Ascending aorta (tissue), 2 donors: ENCODE measurements at regions of chr19 and their contacts with region 1.

Region 1: DNA sequence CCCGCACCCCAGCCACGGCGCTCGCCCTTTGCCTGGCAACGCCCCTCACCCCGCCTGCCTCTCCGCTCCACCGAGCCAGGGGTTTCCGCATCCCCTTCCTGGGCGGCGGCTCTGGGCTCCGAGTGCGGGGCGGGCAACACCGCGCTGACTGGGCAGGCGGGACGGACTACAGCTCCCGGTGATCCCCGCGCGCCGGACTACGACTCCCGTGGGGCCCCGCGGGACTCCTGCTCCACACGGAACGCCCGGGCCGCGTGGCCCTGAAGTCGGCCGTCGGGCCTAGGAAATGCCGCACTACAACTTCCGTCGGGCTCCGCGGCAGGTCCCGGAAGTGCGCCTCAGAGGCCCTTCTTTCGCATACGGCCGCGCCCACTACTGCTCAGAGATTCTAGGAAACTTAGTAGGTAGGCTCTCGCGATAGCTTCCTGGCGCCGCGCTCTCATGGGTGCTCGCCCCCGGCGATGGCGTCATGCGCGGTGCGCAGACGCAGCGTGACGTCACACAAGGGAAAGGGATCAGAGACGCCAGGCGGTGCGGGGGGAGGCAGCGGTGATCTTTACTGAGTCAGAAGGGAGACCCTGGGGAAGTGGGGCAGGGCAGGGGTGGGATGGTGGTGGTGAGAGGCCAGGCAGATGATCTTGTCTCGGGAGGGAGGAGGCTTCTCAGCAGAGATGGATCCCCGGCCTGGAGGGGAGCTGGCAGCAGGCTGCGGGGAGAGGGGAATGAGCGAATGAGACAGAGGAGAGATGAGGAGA is at the start of gene JOSD2:
- DNase-seq: peak; percentile 97 to 100
- H3K4me3 ChIP-seq: peak within 1 kb of the TSS; percentile 80 to 92
- H3K27ac ChIP-seq: peak within 1 kb of the TSS; percentile 65 to 68
- H3K4me1 ChIP-seq: peaks cover 6% of the 10 kb centered on the region in 2 donors
- H3K27me3 ChIP-seq: no peaks in the 10 kb centered on the region
- CTCF ChIP-seq: no peak
- total RNA-seq, gene JOSD2: 169 TPM

Region 2: DNA sequence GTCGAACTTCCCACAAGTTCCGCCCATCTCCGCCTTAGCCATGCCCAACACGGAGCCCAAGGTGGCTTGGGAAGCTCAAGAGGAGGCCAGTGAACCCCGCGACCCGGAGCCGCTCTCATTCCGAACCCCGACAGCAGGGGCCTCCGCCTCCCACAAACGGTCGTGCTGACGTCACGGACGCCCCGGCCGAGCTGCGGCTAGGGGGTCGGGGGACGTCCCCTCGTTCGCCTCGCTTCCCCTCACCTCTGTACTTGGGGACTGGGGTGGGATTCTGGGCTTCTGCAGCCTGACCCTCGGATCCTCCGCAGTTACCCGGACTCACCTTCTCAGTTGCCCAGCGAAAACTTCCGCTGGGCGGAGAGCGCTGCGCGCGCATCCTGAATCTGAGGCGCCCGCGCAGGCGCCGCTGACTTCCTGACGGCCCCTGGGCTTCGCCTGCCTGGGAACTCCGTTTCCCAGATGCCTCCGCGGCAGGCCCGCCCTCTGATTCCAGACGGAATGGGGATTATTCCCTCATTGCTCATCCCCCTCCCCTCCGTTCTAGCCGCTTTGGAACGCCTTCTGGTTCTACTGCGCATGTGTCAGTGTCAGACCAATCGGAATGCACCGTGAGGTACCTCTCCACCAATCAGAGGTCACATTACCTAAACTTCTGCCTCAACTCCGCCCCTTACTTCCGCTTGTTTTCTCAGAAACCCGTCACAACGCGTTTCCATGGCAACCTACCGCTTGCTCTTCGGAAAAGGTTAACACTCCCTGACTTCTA is 486.0 kb before region 1 on chr19 and contains the start of gene VRK3:
- intact Hi-C with region 1: loop called (anchors 10 kb)
- DNase-seq: peak; percentile 99 to 100
- H3K4me3 ChIP-seq: peak within 1 kb of the TSS; percentile 84 to 95
- H3K27ac ChIP-seq: peak within 1 kb of the TSS; percentile 87 to 94
- H3K4me1 ChIP-seq: peaks cover 15 to 22% of the 10 kb centered on the region in 2 donors
- H3K27me3 ChIP-seq: no peaks in the 10 kb centered on the region
- CTCF ChIP-seq: peak in 1 of 3 experiments; percentile 23
- total RNA-seq, gene VRK3: 27.6 TPM

Region 3: DNA sequence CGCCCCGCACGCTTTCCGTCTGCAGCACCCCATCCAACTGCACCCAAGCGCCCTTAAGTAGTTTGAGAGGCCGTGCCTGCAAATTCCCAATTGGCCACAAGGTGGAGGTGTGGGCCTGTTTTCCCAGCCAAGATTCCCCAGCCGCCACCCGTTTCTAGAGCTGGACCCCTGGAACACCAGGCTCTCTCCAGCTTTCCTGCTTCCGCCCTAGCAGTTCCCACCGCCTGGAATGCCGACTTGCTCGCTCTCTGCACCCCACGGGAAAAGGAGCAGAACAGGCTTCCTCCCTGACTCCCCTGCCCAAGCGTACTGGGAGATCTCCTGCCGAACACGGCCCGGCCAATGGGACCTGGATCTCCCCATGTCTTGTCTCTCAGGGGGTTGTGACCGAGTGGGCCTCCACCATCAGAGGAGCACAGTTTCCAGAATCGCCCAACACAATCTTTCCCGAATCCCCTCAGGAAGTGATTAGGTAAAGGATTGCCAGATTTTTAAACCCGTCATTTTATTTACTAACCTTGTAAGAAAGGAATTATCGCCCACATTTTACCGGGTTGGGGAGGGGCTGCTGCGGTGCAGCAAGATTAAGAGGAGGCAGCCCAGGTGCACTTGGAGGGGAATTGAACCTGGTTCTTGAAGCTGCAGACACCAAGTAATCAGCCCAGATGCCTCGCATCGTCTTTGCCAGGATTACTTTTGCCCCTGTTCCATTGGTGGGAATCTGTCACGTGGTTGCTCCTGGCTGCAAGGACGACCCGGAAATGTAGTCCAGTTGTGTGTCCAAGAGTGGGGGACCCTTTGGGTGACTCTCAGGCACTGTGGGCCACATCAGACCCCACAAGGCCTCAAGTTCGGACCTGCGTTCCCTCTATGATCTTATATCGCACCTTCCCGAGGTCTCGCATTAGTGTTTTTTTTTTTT is 142.3 kb before region 1 on chr19:
- intact Hi-C with region 1: loop called (anchors 5 kb)
- DNase-seq: peak; percentile 61 to 92
- H3K4me3 ChIP-seq: peak overlapping the region; percentile 54 to 75
- H3K27ac ChIP-seq: peak overlapping the region; percentile 41 to 55
- H3K4me1 ChIP-seq: no peaks in the 10 kb centered on the region
- H3K27me3 ChIP-seq: no peaks in the 10 kb centered on the region
- CTCF ChIP-seq: peak; percentile 73 to 92 (median 78)

Region 4: DNA sequence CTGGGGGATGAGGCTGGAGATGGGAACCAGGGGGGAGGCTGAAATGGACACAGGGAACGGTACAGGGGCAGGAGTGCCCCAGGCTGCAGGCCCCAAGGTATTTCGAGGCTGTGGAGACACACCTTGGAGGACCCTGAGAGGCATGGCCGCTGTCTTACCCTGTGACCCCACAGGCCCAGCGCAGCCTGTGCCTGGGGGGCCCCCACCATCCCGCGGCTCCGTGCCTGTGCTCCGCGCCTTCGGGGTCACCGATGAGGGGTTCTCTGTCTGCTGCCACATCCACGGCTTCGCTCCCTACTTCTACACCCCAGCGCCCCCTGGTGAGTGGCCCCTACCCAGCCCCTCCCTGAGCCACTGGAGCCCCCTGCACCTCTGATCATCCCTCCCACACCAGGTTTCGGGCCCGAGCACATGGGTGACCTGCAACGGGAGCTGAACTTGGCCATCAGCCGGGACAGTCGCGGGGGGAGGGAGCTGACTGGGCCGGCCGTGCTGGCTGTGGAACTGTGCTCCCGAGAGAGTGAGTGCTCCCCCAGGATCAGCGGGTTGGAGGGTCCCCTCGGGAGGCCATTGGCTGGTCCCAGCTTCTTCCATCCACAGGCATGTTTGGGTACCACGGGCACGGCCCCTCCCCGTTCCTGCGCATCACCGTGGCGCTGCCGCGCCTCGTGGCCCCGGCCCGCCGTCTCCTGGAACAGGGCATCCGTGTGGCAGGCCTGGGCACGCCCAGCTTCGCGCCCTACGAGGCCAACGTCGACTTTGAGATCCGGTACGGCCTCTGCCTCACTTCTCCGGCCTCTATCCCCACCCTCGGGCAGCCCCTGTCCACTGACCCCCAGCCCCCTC is 109.4 kb before region 1 on chr19:
- intact Hi-C with region 1: no loop called
- DNase-seq: no peak
- H3K4me3 ChIP-seq: no peak overlapping the region
- H3K27ac ChIP-seq: no peak overlapping the region
- H3K4me1 ChIP-seq: no peaks in the 10 kb centered on the region
- H3K27me3 ChIP-seq: no peaks in the 10 kb centered on the region
- CTCF ChIP-seq: no peak

Region 5: DNA sequence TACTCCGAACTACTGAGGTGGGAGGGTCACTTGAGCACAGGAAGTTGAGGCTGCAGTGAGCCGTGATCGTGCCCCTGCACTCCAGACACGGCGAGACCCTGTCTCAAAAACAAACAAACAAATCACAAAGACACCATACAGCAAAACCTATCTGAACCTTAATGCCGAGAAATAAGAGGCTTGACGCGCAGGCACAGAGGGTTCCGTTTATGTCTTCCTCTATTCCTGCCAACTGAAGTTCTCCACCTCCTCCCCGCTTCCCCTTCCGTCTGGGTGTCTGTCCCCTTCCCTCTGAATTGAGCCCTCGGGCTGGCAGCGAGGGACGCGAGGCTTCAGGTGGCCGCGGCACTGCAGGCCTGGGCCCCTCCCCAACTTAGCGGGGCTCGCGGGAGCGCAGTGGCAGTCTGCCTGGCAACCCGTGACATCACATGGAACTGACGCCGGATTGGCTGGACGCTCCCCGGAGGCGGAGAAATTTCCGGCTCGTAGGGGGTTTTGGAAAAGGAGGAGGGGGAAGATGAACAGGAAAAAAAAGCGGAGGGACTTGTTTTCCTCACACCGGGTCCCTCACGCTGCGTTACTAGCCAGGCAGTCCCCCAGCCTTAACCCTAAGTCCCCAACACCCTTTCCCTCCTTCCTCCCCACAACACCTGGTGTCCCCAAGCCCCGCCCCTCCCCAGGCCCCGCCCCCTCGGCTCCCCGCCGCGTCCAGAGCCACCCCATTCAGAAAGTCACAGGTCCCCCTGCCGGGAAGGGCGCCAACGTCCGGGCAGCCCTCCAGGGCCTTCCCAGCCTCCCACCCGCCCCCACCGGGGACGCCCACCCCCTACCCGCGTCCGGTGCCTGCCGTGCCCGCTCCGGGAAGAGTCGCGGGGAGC is 79.7 kb before region 1 on chr19:
- intact Hi-C with region 1: loop called (anchors 5 kb)
- DNase-seq: peak; percentile 25 to 89
- H3K4me3 ChIP-seq: peak overlapping the region; percentile 59 to 76
- H3K27ac ChIP-seq: peak overlapping the region; percentile 32 to 44
- H3K4me1 ChIP-seq: peaks cover 10% of the 10 kb centered on the region in 2 donors
- H3K27me3 ChIP-seq: peaks cover 20% of the 10 kb centered on the region
- CTCF ChIP-seq: no peak

Region 6: GRCh38 chr19:50607874-50608785 is 96.9 kb after region 1 on chr19:
- intact Hi-C with region 1: no loop called
- DNase-seq: peak; percentile 10 to 74
- H3K4me3 ChIP-seq: no peak overlapping the region
- H3K27ac ChIP-seq: no peak overlapping the region
- H3K4me1 ChIP-seq: no peaks in the 10 kb centered on the region
- H3K27me3 ChIP-seq: no peaks in the 10 kb centered on the region
- CTCF ChIP-seq: peak in 1 of 3 experiments; percentile 18

Region 7: GRCh38 chr19:50804420-50805272 is 293.4 kb after region 1 on chr19:
- intact Hi-C with region 1: loop called (anchors 1 kb)
- DNase-seq: peak; percentile 95 to 99
- H3K4me3 ChIP-seq: peak overlapping the region; percentile 92 to 93
- H3K27ac ChIP-seq: peak overlapping the region; percentile 97
- H3K4me1 ChIP-seq: peaks cover 0 to 13% of the 10 kb centered on the region in 2 donors
- H3K27me3 ChIP-seq: no peaks in the 10 kb centered on the region
- CTCF ChIP-seq: no peak

Region 8: GRCh38 chr19:51367565-51368365 is 856.5 kb after region 1 on chr19:
- intact Hi-C with region 1: loop called (anchors 10 kb)
- DNase-seq: peak; percentile 95 to 100
- H3K4me3 ChIP-seq: peak overlapping the region; percentile 79 to 82
- H3K27ac ChIP-seq: peak overlapping the region; percentile 83 to 94
- H3K4me1 ChIP-seq: peaks cover 6 to 12% of the 10 kb centered on the region in 2 donors
- H3K27me3 ChIP-seq: no peaks in the 10 kb centered on the region
- CTCF ChIP-seq: no peak